ENCODE measurements at regions of chr6 and their contacts with region 1.

Region 1: DNA sequence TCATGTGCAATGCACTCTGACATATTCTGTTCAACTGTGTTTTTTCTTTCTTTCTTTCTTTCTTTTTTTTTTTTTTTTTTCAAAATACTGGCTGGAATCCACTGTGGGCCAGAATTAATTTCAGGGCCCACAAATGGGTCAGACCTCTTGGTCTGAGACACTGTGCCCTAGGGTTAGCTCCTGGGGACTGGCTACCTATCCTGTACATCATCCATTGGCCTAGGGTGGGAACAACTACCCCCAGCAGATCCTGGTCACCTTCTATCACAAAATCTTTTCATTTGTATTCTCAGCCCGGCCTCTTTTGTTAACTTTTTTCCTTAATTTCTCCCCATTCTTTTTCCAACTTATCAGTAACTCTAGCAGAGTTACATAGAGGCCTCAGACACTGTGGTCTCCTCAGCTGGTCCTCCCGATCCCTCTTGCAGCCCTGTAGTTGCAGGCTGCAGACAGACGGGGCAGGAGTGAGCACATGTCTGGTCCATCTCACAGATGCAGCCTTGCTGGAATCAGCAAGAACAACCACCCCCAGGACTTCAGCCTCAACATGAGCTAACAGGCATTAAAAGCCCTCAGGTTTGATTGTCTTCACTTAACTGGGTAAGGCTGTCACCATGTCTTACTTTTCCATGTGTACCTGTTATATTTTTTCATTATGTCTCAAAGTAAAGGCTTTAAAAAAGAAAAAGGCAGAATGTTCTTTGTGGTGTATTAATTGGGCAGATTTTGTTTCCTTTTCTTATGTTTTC is 41.3 kb downstream of the TXLNB start:
- DNase-seq: peak; percentile 75
- H3K4me3 Mint-ChIP-seq: no peak overlapping the region
- H3K27ac Mint-ChIP-seq: peak overlapping the region; percentile 73
- H3K4me1 Mint-ChIP-seq: peaks cover 49% of the 10 kb centered on the region
- H3K27me3 Mint-ChIP-seq: no peaks in the 10 kb centered on the region

Region 2: DNA sequence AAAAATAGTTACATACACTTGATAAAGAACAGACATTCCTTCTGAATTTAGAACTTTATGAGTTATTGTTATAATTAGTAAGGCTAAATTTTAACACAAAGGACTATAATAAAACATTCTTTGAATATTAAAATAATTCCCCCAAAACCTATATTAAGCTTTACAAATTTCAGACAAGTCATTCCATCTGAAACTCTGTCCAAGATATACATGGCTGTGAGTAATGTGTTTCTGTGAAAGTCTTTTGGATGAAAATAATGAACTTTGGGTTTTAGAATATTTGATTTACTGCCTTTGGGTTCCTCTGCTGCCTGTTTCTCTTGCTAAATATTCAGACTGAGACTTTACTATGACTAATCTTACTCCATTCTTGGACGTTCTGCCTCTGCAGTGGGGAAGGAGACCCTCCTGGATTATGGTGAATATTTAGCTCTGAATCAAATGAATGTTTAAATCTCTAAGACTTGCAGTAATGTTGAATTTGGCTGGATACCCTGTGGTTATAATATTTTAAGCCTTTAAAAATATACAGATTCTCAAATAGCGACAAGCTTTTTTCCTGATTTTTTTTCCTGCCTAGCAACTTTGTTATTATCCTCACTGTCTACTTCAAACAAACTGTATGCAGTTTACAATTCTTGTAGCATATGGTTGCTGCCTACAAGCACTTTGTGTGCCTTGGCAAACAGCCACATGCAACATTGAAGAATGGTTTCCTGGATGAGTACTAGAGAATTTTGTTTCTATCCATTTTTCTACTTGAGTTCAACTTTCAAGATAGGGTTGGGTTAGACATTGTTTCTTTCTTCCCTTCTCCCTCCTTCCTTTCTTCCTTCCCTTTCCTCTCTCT is 10.1 kb before region 1 on chr6:
- CTCF ChIA-PET with region 1: interaction called, 10 read pairs
- POLR2A ChIA-PET with region 1: no interaction called
- intact Hi-C with region 1: no loop called
- DNase-seq: no peak
- H3K4me3 Mint-ChIP-seq: no peak overlapping the region
- H3K27ac Mint-ChIP-seq: no peak overlapping the region
- H3K4me1 Mint-ChIP-seq: peaks cover 6% of the 10 kb centered on the region
- H3K27me3 Mint-ChIP-seq: no peaks in the 10 kb centered on the region

Region 3: DNA sequence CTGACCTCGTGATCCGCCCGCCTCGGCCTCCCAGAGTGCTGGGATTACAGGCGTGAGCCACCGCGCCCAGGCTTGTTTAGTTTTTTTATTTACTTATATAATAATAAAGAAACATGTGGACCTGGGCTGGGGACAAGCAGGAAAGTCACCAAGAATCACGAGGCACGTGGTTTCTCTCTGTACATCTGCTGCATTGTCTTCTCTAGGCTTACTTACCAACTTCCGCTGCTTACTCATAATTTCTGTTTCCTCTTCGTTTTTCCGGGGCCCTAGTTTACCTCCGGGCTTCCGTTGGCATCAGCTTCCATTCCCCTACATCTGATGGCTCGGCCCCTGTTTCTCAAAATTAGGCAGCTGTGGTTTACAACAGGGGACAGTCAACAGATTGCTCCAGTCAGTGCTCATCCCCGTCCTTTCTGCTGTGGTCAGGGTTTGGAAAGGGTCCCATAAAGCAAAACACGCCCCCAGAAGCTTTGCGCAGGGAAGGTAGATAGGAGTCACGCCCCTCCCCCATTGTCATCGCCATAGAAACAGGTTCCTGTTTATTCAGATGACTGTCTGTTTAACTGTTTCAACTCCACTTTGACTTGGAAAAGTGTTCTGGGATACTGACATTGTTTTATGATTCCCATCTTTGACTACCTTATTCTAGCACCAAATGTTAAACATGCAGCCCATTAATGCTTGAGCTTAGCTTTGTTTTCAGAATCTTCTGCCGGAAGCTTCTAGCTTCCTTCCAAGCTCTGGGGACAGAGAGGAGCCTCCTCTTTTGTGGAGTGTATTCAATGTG is 73.2 kb after region 1 on chr6:
- CTCF ChIA-PET with region 1: no interaction called
- POLR2A ChIA-PET with region 1: no interaction called
- intact Hi-C with region 1: loop called (anchors 2 kb)
- DNase-seq: peak; percentile 84
- H3K4me3 Mint-ChIP-seq: peak overlapping the region; percentile 67
- H3K27ac Mint-ChIP-seq: peak overlapping the region; percentile 94
- H3K4me1 Mint-ChIP-seq: peaks cover 23% of the 10 kb centered on the region
- H3K27me3 Mint-ChIP-seq: no peaks in the 10 kb centered on the region

Measured in activated CD4-positive, alpha-beta memory T cell treated with anti-CD3 and anti-CD28 coated beads for 36 hours (primary cell).